ENCODE measurements at regions of chr7 and their contacts with region 1.

Region 1: GRCh38 chr7:81715984-81716588 is 53.8 kb downstream of the HGF start:
- DNase-seq: peak; percentile 58
- H3K4me3 Mint-ChIP-seq: no peak overlapping the region
- H3K27ac Mint-ChIP-seq: no peak overlapping the region
- H3K4me1 Mint-ChIP-seq: no peaks in the 10 kb centered on the region
- H3K27me3 Mint-ChIP-seq: no peaks in the 10 kb centered on the region
- CTCF ChIP-seq: peak; percentile 75

Region 2: DNA sequence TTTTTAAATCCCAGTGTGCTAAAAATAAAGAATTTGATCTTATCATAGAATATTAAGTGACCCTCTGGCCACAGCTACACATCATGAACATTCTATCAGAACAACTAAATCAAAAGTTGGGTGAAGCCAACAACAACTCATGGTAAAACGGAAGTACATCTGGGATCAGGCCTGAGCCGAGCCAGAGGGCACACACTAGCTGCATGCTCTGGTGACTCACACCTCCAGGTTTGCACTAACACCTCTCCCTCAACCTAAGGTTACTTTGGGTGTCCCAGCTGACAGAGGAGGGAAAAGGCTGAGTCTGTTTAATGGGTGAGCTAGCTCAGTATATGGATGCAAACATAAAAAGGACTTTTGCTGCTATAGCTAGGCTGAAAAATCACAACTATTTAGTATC is 227.9 kb before region 1 on chr7:
- CTCF ChIA-PET with region 1: interaction called, 26 read pairs
- POLR2A ChIA-PET with region 1: interaction called, 3 read pairs
- intact Hi-C with region 1: no loop called
- DNase-seq: peak; percentile 46
- H3K4me3 Mint-ChIP-seq: no peak overlapping the region
- H3K27ac Mint-ChIP-seq: no peak overlapping the region
- H3K4me1 Mint-ChIP-seq: no peaks in the 10 kb centered on the region
- H3K27me3 Mint-ChIP-seq: peaks cover 11% of the 10 kb centered on the region
- CTCF ChIP-seq: no peak

Region 3: DNA sequence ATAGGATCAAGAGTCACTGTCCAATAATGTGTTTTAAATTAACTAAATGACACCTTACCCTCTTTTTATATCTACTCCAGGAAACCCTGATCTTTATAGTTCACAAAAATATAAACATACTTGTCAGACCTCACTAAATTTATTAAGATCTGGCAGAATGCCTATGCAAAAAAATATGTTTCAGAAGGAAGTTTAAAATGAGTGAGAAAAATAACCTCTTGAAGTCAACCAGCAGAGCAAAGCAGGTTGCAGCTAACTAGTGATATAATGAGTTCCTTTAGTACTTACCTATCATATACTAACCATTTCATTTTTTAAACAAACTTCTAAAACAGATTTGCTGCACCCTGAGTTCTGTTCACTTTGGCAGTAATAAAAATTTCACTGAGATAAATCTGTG is 67.7 kb after region 1 on chr7:
- CTCF ChIA-PET with region 1: no interaction called
- POLR2A ChIA-PET with region 1: no interaction called
- intact Hi-C with region 1: no loop called
- DNase-seq: no peak
- H3K4me3 Mint-ChIP-seq: no peak overlapping the region
- H3K27ac Mint-ChIP-seq: no peak overlapping the region
- H3K4me1 Mint-ChIP-seq: no peaks in the 10 kb centered on the region
- H3K27me3 Mint-ChIP-seq: peaks cover 64% of the 10 kb centered on the region
- CTCF ChIP-seq: no peak

Region 4: DNA sequence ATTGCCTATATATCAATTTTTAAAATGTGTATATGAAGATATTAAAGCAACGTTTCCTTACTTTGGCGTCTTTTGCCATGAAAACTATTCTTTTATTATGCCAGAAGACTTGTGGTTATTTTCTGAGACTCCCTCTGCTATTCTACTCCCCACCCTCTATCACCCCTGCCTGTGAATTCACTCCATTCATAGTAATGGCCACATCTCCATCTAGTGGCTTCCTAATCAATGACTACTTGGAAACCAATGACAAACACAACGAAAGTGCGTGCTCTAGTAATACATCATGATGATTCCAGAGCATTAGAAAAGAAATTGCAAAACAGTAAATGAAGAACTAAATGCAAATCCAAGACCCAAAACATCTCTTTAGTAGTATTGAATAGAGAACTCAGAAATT is 240.4 kb after region 1 on chr7:
- CTCF ChIA-PET with region 1: interaction called, 3 read pairs
- POLR2A ChIA-PET with region 1: no interaction called
- intact Hi-C with region 1: loop called (anchors 2 kb)
- DNase-seq: peak; percentile 22
- H3K4me3 Mint-ChIP-seq: no peak overlapping the region
- H3K27ac Mint-ChIP-seq: no peak overlapping the region
- H3K4me1 Mint-ChIP-seq: no peaks in the 10 kb centered on the region
- H3K27me3 Mint-ChIP-seq: peaks cover 66% of the 10 kb centered on the region
- CTCF ChIP-seq: peak; percentile 23

Region 5: DNA sequence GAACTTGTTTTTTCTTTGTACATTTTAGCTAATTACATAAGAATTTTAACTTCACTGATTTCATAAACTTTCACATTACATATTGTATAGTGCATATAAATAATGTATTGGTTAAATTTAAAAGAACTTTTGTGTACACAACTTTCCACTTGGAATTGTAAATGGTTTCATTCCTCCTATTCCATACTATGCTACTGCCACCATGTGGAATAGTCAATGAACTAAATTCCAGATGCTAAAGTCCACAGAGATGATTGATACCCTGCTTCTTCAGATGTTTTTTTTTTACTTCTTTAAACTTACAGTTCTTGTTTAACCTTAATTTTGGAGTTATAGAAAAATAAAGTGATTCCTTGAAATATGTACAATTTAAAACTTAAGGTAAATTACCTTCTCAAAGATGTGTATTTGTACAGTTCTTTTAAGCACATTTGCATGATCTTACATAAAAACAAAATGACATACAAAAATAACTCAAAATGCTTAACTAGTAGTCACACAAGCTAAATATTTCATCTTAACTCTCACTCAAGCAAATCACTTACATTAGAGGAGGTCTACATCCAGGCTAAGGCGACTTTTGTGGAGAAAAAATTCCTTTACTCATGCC is 301.4 kb after region 1 on chr7:
- CTCF ChIA-PET with region 1: interaction called, 8 read pairs
- POLR2A ChIA-PET with region 1: no interaction called
- intact Hi-C with region 1: loop called (anchors 2 kb)
- DNase-seq: peak; percentile 28
- H3K4me3 Mint-ChIP-seq: no peak overlapping the region
- H3K27ac Mint-ChIP-seq: no peak overlapping the region
- H3K4me1 Mint-ChIP-seq: peaks cover 4% of the 10 kb centered on the region
- H3K27me3 Mint-ChIP-seq: peaks cover 39% of the 10 kb centered on the region
- CTCF ChIP-seq: peak; percentile 28